Activated CD8-positive, alpha-beta T cell treated with anti-CD3 and anti-CD28 coated beads for 36 hours (primary cell): ENCODE measurements at regions of chr11 and their contacts with region 1.

Region 1: DNA sequence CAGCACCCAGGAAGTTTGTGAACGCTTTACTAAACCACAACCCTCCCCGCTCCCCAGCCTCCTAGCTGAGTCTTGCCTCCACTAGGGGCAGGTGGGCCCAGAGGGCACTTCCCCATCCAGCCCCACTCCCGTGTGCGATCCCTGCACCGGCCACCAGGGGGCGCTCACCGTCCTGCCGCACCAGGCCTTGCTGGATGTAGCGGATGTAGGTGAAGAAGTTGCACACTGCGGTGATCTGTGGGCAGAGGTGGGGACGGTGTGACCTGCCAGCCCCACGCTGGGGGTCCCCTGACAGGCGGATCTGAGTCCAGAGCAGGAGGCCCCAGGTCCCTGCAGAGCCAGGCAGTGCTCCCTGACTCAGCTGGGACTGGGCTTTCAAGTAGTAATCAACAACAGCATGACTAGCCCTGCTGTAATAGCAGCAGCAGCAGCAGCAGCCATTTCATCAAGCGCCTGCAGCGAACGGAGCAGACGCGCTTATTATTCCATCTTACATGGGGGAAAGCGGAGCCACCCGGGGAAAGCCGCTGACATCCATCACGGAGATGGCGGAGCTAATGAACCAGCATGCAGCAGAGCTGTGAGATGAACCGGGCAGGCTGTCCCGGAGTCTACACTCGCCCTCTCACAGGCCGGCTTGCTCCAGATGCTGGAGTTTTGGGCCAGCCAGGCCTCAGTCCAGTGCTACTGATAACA is 7.9 kb upstream of the FADS3 start:
- DNase-seq: peak; percentile 95
- ATAC-seq: peak; percentile 95
- H3K4me3 Mint-ChIP-seq: no peak overlapping the region
- H3K27ac Mint-ChIP-seq: no peak overlapping the region
- H3K4me1 Mint-ChIP-seq: peaks cover 6% of the 10 kb centered on the region
- H3K27me3 Mint-ChIP-seq: no peaks in the 10 kb centered on the region
- CTCF ChIP-seq: peak; percentile 100

Region 2: GRCh38 chr11:61747192-61747966 is 151.9 kb before region 1 on chr11:
- CTCF ChIA-PET with region 1: no interaction called
- POLR2A ChIA-PET with region 1: no interaction called
- intact Hi-C with region 1: no loop called
- DNase-seq: peak; percentile 67
- ATAC-seq: peak; percentile 70
- H3K4me3 Mint-ChIP-seq: no peak overlapping the region
- H3K27ac Mint-ChIP-seq: no peak overlapping the region
- H3K4me1 Mint-ChIP-seq: peaks cover 2% of the 10 kb centered on the region
- H3K27me3 Mint-ChIP-seq: peaks cover 21% of the 10 kb centered on the region
- CTCF ChIP-seq: peak; percentile 97

Region 3: DNA sequence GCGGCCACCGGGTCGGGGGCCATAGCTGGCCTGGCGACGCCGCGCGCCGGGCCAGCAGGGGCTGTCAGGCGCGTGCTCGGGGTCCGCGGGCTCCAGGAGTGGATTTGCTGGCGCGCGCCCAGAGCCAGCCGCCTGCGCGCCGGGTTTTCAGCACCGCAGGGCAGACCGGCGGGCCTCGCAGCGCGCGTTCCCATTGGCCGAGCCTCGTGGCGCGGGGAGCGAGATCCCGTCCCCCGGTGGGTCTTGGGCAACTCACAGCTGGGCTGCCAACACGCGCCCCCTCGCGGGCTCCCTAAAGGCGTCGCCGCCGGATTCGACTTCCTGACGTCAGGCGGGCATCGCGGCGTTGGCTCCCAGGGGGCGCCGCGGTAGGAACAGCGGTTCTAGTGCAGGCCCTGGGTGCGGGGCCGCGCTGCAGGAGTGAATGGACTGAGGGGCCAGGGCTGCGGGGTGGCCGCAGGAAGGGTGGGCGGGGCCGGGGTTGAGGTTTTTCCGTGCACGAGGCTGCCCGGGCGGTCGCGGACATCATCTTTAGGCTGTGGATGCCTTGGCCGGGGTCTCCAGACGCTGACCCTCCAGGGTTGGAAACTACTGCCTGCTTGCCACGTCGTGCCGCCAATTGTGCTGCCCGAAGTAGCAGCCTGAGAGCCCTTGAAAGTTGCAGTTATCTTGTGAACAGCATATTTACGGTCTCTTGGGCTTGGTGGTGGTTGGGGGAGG is 82.4 kb before region 1 on chr11 and contains the start of gene FADS1:
- CTCF ChIA-PET with region 1: interaction called, 15 read pairs
- POLR2A ChIA-PET with region 1: no interaction called
- intact Hi-C with region 1: no loop called
- DNase-seq: peak; percentile 92
- ATAC-seq: peak; percentile 72
- H3K4me3 Mint-ChIP-seq: peak within 1 kb of the TSS; percentile 96
- H3K27ac Mint-ChIP-seq: peak within 1 kb of the TSS; percentile 83
- H3K4me1 Mint-ChIP-seq: peaks cover 5% of the 10 kb centered on the region
- H3K27me3 Mint-ChIP-seq: peaks cover 4% of the 10 kb centered on the region
- CTCF ChIP-seq: peak; percentile 59
- total RNA-seq, gene FADS1: 33.9 to 34.4 TPM

Region 4: GRCh38 chr11:61851113-61851899 is 48.0 kb before region 1 on chr11:
- CTCF ChIA-PET with region 1: no interaction called
- POLR2A ChIA-PET with region 1: no interaction called
- intact Hi-C with region 1: no loop called
- DNase-seq: no peak
- ATAC-seq: no peak
- H3K4me3 Mint-ChIP-seq: no peak overlapping the region
- H3K27ac Mint-ChIP-seq: no peak overlapping the region
- H3K4me1 Mint-ChIP-seq: no peaks in the 10 kb centered on the region
- H3K27me3 Mint-ChIP-seq: no peaks in the 10 kb centered on the region
- CTCF ChIP-seq: no peak

Region 5: GRCh38 chr11:61885166-61885778 is 14.0 kb before region 1 on chr11:
- CTCF ChIA-PET with region 1: interaction called, 50 read pairs
- POLR2A ChIA-PET with region 1: no interaction called
- intact Hi-C with region 1: no loop called
- DNase-seq: no peak
- ATAC-seq: no peak
- H3K4me3 Mint-ChIP-seq: no peak overlapping the region
- H3K27ac Mint-ChIP-seq: no peak overlapping the region
- H3K4me1 Mint-ChIP-seq: no peaks in the 10 kb centered on the region
- H3K27me3 Mint-ChIP-seq: no peaks in the 10 kb centered on the region
- CTCF ChIP-seq: no peak

Region 6: GRCh38 chr11:61940466-61940865 is 41.2 kb after region 1 on chr11:
- CTCF ChIA-PET with region 1: interaction called, 215 read pairs
- POLR2A ChIA-PET with region 1: no interaction called
- intact Hi-C with region 1: loop called (anchors 5 kb)
- DNase-seq: no peak
- ATAC-seq: no peak
- H3K4me3 Mint-ChIP-seq: no peak overlapping the region
- H3K27ac Mint-ChIP-seq: no peak overlapping the region
- H3K4me1 Mint-ChIP-seq: no peaks in the 10 kb centered on the region
- H3K27me3 Mint-ChIP-seq: peaks cover 9% of the 10 kb centered on the region
- CTCF ChIP-seq: no peak

Region 7: DNA sequence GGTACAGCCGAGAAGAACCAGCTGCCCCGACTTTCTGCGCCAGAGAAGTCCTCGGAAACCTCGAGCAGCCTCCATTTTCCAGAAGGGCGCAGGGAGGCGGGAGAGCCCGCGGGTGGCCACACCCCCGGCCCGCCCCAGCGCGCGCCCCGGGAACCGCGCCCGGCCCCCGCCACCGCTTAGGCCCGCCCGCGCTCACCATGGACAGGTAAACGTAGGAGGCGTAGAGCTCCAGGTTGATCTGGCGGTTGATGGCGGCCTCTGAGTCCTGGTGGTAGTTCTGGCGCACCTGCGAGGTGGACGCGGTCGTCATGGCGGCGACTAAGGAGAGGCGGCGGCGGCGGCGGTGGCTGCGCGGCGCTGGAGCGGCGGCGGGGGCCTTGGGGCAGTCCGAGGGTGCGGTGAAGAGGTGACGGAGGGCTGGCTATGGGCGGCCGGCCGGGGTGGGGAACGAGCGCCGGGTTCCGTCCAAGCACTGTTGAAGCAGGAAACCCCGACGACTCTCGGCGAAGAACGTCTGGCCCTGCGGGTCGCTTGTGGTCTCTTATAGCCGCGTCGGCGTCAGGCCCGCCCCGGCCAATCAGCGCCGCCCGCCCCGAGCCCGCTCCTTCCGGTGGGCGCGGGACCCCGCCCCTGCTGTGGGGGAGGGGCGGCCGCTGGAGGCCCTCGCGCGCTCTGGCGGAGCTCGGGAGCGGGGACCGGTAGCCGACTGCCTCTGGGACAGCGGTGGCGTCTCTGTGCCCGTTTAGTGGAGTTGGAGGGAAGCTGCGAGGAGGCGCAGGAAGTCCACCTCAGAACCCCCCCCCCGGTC is 68.0 kb after region 1 on chr11 and contains the start of gene FTH1:
- CTCF ChIA-PET with region 1: interaction called, 13 read pairs
- POLR2A ChIA-PET with region 1: interaction called, 3 read pairs
- intact Hi-C with region 1: no loop called
- DNase-seq: peak; percentile 89
- ATAC-seq: peak; percentile 81
- H3K4me3 Mint-ChIP-seq: peak within 1 kb of the TSS; percentile 86
- H3K27ac Mint-ChIP-seq: peak within 1 kb of the TSS; percentile 94
- H3K4me1 Mint-ChIP-seq: peaks cover 61% of the 10 kb centered on the region
- H3K27me3 Mint-ChIP-seq: no peaks in the 10 kb centered on the region
- CTCF ChIP-seq: no peak
- total RNA-seq, gene FTH1: 700 to 729 TPM

Region 8: DNA sequence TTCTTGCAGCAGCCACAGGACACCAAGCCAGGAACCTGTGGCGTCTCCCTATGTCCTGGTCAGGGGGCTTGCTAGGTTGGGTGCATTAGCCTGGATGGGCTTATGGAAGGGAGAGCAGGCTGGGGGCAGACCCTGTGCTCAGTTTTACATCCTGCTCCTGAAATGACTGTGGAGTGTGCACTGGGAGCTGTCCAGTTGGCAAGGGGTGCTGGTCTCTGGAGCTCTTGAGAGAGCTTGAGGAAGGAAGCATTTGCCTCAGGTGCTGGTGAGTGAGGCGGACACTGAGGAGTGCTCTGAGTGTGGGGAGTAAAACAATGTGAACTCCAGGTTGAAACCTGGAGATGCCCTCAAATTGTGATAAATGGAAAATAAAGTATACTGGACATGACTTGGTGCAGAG is 396.2 kb after region 1 on chr11:
- CTCF ChIA-PET with region 1: no interaction called
- POLR2A ChIA-PET with region 1: no interaction called
- intact Hi-C with region 1: no loop called
- DNase-seq: peak; percentile 37
- ATAC-seq: peak; percentile 53
- H3K4me3 Mint-ChIP-seq: no peak overlapping the region
- H3K27ac Mint-ChIP-seq: no peak overlapping the region
- H3K4me1 Mint-ChIP-seq: no peaks in the 10 kb centered on the region
- H3K27me3 Mint-ChIP-seq: peaks cover 14% of the 10 kb centered on the region
- CTCF ChIP-seq: no peak

Region 9: DNA sequence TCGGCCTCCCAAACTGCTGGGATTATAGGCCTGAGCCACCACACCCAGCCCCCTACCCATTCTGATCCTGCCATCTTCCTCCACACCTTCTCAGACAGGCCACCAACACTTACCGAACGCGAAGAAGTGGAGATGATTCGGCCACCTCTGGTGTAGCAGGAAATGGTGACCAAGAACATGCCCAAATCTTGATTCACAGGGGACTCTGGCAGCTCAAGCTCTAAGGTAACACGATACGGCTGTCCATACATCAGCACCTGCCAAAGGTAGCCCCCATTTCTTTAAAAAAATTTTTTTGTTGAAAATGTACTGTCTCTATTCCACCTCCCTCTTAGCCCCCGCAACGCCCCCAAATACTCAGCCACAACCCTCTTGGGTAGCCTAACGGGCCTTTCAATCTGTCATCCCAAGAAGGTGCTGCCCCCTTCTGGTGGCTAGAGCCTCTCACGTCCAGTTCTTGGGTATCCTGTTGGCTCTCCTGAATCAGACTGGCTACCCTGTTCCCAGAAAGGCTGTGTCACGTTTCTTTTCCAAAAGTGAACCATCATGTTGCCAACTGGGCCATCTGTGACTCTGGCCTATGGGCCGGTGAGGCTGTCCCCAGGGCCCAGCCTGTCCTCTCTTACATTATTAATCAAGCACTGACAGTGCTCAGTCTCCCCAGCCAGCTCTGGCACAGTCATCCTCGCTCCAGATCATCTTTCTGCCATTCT is 795.3 kb after region 1 on chr11:
- CTCF ChIA-PET with region 1: no interaction called
- POLR2A ChIA-PET with region 1: no interaction called
- intact Hi-C with region 1: no loop called
- DNase-seq: peak; percentile 87
- ATAC-seq: peak; percentile 84
- H3K4me3 Mint-ChIP-seq: no peak overlapping the region
- H3K27ac Mint-ChIP-seq: no peak overlapping the region
- H3K4me1 Mint-ChIP-seq: peaks cover 7% of the 10 kb centered on the region
- H3K27me3 Mint-ChIP-seq: no peaks in the 10 kb centered on the region
- CTCF ChIP-seq: peak; percentile 92